ENCODE measurements at regions of chr3 and their contacts with region 1.

Region 1: DNA sequence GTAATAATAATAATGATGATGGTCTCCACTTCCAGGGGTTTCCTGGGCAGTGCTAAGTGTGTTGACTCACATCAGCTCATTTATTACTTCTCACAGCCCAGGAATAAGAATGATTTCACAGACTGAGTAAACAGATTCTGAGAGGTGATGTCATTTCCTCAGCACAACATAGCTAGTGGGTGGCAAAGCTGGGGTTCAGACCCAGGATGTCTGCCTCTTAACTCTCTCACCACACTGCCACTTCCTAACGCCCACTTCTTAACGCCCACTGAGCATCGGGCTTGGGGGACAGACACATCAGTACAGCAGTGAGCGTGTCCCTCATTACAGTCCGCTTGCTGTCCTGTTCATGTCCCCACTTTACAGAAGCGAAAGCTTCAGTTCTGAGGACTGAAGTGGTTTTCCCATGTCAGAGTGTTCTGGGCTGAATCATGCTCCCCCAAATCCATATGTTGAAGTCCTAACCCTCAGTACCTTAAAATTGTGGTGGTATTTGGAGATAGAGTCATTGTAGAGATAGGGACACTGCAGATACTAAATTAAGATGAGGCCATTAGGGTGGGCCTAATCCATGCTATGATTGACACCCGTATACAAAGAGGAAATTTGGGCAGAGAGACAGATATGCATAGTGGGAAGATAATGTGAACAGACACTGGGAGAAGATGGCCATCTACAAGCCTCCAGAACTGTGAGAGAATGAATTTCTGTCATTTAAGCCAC is 68.0 kb downstream of the ATP2B2 start:
- DNase-seq: peak; percentile 87
- H3K4me3 Mint-ChIP-seq: peak overlapping the region; percentile 11
- H3K27ac Mint-ChIP-seq: peak overlapping the region; percentile 83
- H3K4me1 Mint-ChIP-seq: peaks cover 31% of the 10 kb centered on the region
- H3K27me3 Mint-ChIP-seq: no peaks in the 10 kb centered on the region

Region 2: GRCh38 chr3:10366651-10367101 is 70.8 kb before region 1 on chr3:
- intact Hi-C with region 1: loop called (anchors 1 kb)
- DNase-seq: peak; percentile 74
- H3K4me3 Mint-ChIP-seq: peak overlapping the region; percentile 1
- H3K27ac Mint-ChIP-seq: peak overlapping the region; percentile 39
- H3K4me1 Mint-ChIP-seq: peaks cover 19% of the 10 kb centered on the region
- H3K27me3 Mint-ChIP-seq: peaks cover 8% of the 10 kb centered on the region

Region 3: GRCh38 chr3:10485380-10485779 is 47.9 kb after region 1 on chr3:
- intact Hi-C with region 1: no loop called
- DNase-seq: no peak
- H3K4me3 Mint-ChIP-seq: no peak overlapping the region
- H3K27ac Mint-ChIP-seq: no peak overlapping the region
- H3K4me1 Mint-ChIP-seq: no peaks in the 10 kb centered on the region
- H3K27me3 Mint-ChIP-seq: peaks cover 2% of the 10 kb centered on the region

Region 4: GRCh38 chr3:10518506-10519150 is 81.2 kb after region 1 on chr3:
- intact Hi-C with region 1: no loop called
- DNase-seq: no peak
- H3K4me3 Mint-ChIP-seq: no peak overlapping the region
- H3K27ac Mint-ChIP-seq: no peak overlapping the region
- H3K4me1 Mint-ChIP-seq: no peaks in the 10 kb centered on the region
- H3K27me3 Mint-ChIP-seq: peaks cover 24% of the 10 kb centered on the region

Region 5: DNA sequence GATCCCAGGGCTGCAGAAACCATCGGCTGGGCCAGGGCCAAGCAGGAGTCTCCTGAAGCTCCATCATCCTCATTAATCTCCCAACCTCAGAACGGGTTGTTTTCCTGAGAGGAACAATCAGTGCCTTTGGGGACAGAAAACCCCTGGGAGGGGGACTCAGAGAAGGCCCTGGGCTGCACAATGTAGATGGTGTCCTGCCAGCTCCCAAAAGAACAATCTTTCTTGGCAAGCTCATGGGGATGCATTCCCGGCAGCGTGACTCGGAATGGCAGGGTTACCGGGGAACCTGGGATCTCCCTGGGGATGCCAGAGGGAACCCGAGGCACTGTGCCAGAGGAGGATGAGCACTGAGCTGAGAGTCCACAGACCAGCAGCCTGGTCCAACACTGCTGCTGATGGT is 140.1 kb after region 1 on chr3:
- intact Hi-C with region 1: no loop called
- DNase-seq: no peak
- H3K4me3 Mint-ChIP-seq: no peak overlapping the region
- H3K27ac Mint-ChIP-seq: no peak overlapping the region
- H3K4me1 Mint-ChIP-seq: no peaks in the 10 kb centered on the region
- H3K27me3 Mint-ChIP-seq: peaks cover 7% of the 10 kb centered on the region